ENCODE measurements at regions of chr3 and their contacts with region 1.

Region 1: DNA sequence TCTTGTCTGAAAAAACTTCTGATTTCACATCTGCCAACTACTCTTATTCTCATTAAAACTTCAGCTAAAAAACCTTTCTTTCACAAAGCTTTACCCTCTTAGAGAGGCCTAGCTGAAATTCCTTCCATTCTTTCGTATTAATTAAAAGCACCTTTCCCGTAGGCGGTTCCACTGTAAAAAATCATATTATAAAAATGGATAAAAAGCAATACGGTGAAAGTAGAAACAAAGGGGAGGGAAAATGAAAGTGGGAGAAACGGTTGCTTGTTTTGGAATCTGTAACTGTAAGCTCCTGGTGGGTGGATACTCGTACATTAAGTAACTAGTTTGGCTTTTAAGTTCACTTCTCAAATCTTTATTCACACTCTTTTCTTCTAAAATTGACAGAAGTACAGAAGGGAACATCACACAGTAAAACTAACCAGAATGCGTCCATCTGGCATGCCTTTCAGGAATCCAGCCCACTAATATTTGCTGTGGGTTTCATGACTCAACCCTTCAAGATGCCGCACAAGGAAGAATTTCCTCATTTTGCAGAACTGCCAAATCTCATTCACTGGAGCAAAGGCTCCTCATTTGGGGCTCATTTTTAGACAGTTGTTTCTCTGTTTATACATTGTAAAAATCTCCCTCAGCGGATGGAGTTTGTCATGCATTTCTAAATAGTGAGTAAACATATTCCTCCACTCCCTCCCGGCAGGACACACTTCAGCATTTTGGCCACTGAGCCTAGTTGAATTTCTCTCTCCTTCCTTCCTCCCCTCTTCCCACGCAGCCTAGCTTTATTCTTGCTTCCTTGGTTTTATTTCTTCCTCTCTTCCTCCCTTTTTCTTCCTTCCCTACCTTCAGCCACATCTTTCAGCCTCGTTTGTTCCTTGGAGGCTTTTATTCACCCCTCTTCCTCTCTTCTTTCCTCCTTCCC is 419.5 kb upstream of the NAALADL2 start:
- DNase-seq: no peak

Region 2: DNA sequence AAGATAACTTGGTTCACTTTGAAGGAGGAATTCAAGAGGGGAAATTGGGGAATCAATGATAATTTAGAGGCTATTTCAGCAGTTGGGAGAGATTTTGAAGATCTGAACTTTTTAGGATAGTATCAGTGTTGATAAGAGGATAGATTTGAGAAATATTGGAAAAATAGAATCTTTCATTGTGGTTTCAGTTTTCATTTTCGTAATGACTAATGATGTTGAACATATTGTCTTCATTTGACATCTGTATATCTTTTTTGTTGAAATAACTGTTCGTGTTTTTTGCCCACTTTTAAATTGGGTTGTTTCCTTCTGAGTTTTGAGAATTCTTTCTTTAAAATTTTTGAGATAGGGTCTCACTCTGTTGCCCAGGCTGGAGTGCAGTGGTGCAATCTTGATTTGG is 1667.9 kb before region 1 on chr3:
- intact Hi-C with region 1: loop called in 1 of 2 experiments (anchors 5 kb)
- DNase-seq: no peak

Region 3: GRCh38 chr3:173977747-173978146 is 461.8 kb before region 1 on chr3:
- intact Hi-C with region 1: no loop called
- DNase-seq: no peak